ENCODE measurements at regions of chr7 and their contacts with region 1.

Region 1: GRCh38 chr7:47945261-47946001 is 2.8 kb downstream of the PKD1L1 start:
- DNase-seq: peak; percentile 86
- H3K4me3 ChIP-seq: no peak overlapping the region
- H3K27ac ChIP-seq: no peak overlapping the region
- H3K4me1 ChIP-seq: peaks cover 0 to 27% (median 14%) of the 10 kb centered on the region in 4 donors
- H3K27me3 ChIP-seq: no peaks in the 10 kb centered on the region
- CTCF ChIP-seq: peak; percentile 77 to 84 (median 81)
- EP300 ChIP-seq: no peak
- POLR2A ChIP-seq: no peak

Region 2: DNA sequence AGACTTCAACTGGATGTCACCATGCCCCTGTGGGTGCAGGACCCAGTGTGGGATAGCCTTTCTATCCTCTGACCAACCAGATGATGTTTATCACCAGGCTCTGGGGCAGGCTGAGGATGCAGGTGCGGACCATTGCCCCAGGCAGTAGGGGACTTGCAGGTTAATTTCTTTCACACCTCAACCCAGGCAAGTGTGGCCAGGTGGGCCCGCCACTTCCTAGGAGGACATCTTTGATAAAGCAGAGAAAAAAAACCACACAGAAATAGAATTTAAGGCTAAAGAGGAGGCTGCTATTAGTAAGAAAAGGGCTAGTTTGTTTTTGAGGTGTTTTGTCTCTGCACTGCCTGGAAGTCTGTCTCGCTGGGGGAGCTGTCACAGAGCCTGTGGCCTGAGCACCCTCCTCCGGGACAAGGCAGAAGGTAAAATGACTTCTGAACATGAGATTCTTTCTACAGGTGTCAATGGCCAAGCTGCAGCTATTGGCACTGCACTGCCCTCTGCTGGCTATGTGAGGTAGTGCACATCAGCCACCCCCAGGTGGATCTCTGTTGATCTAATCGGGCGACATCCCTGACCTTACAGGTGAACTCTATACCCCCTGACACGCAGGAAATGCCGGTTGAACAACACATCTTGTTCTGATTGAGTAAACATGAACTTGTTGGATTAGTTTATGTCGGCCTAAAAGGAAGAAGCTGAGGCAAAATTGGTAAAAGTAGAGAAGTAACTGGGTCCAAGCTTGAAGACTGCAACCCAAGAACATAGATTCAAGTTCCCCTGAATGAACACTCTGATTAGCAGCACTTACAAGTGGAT is 164.6 kb after region 1 on chr7:
- in situ Hi-C with region 1: loop called in 3 of 4 experiments (anchors 5 to 10 kb)
- intact Hi-C with region 1: loop called (anchors 2 kb)
- DNase-seq: peak; percentile 91
- H3K4me3 ChIP-seq: no peak overlapping the region
- H3K27ac ChIP-seq: no peak overlapping the region
- H3K4me1 ChIP-seq: no peaks in the 10 kb centered on the region
- H3K27me3 ChIP-seq: no peaks in the 10 kb centered on the region
- CTCF ChIP-seq: peak; percentile 98 to 100 (median 99)
- EP300 ChIP-seq: no peak
- POLR2A ChIP-seq: no peak